Posterior vena cava (tissue), 2 donors: ENCODE measurements at regions of chr11 and their contacts with region 1.

Region 1: DNA sequence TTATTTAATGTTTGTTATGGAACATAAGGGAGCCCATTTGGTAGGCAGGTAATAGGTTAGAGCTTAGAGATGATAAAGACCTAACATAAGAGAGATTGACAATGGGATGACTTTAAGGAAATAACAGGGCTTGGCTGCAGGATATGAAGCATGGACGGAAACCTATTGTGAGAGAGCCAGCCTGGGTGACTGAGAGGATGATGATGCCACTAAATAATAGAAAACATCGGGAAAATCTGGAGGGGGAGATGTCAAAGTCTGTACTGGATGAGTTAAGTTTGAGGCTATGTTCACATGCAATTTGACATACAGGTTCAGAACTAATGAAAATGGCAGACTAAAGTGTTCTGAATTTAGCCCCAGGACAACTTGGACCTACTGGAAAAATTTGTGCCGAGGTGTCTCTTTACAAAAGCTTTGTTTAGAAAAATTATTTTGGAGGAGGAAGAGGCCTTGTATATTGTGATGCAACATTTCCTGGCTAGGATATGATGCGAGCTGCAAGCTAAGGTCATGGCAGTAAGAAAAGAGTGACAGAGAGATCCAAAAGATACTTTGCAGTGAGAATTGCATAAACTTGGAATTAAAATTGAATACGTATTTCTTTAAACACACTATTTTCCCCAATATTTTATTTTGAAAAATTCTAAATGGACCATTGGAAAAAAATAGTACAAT is 339.3 kb upstream of the PLET1 start:
- DNase-seq: no peak

Region 2: GRCh38 chr11:112670806-112671570 is 71.0 kb after region 1 on chr11:
- intact Hi-C with region 1: loop called in 1 of 2 experiments (anchors 2 kb)
- DNase-seq: no peak